Activated CD4-positive, alpha-beta memory T cell treated with anti-CD3 and anti-CD28 coated beads for 36 hours (primary cell): ENCODE measurements at regions of chr20 and their contacts with region 1.

Region 1: DNA sequence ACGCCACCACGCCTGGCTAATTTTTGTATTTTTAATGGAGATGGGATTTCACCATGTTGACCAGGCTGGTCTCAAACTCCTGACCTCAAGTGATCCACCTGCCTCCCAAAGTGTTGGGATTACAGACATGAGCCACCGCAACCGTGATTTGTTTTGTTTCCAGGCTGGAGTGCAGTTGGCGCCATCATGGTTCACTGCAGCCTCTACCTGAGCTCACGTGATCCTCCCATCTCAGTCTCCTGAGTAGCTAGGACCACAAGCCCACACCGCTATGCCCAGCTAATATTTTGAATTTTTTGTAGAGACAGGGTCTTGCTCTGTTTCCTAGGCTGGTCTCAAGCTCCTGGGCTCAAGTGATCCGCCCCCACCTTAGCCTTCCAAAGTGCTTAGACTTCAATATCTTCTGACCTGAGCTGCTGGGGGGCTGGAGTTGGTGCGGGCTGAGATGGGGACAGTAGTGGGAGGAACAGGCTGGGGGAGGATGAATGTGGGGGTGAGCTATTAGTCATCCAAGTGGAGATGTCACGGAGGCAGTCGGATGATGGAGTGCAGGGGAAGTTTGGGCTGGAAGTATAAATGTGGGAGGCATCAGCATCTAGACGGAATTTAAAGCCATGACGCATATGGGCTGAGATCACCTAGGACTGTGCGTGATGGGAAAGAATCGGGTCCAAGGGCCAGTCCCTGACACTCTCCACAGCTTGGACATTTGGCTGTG is 23.1 kb upstream of the ZMYND8 start:
- DNase-seq: no peak
- H3K4me3 Mint-ChIP-seq: no peak overlapping the region
- H3K27ac Mint-ChIP-seq: no peak overlapping the region
- H3K4me1 Mint-ChIP-seq: peaks cover 18% of the 10 kb centered on the region
- H3K27me3 Mint-ChIP-seq: no peaks in the 10 kb centered on the region

Region 2: DNA sequence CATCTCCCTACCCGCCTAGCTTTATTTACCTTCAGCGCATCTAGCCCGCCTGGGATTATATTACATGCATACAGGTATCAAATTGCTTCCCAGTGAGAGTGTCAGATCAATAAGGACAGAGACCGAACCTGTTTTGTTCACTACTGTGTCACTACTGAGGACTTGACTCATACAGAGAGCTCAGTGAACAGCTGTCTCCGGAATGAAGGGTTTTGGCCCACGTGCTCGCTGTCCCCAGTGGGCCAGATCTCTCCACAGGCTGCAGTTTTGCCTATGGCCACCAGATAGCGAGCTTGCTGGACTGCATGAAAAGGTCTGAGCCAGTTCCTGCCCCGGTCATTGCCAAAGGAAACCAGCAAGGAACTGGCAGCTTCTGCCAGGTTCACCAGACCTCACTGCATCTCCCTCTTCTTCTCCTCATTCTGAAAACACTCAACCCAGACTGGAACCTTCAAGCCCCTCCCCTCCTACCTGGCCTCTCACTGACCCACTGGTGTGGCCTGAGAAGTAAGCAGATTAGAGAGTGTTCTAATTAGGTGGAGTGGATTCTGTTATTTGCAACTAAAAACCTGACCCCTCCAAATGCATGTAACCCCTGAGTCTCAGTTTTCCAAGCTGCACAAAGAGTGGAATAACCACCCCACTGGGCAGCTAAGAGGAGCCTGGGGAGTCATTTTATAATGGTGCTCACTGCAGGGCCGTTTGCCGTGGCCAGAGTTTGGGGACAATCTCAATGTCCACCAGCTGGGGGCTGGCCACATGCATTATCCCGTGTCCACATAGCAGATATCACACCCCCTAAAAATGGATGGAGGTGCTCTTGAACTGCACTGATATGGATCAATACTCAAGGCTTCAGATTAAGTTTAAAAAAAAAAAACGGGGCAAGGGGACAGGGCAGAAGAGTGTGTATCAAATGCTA is 173.8 kb before region 1 on chr20:
- CTCF ChIA-PET with region 1: interaction called, 122 read pairs
- POLR2A ChIA-PET with region 1: no interaction called
- intact Hi-C with region 1: no loop called
- DNase-seq: peak; percentile 12
- H3K4me3 Mint-ChIP-seq: no peak overlapping the region
- H3K27ac Mint-ChIP-seq: no peak overlapping the region
- H3K4me1 Mint-ChIP-seq: no peaks in the 10 kb centered on the region
- H3K27me3 Mint-ChIP-seq: no peaks in the 10 kb centered on the region

Region 3: GRCh38 chr20:47241345-47241781 is 138.2 kb before region 1 on chr20:
- CTCF ChIA-PET with region 1: interaction called, 10 read pairs
- POLR2A ChIA-PET with region 1: no interaction called
- intact Hi-C with region 1: no loop called
- DNase-seq: no peak
- H3K4me3 Mint-ChIP-seq: no peak overlapping the region
- H3K27ac Mint-ChIP-seq: no peak overlapping the region
- H3K4me1 Mint-ChIP-seq: peaks cover 3% of the 10 kb centered on the region
- H3K27me3 Mint-ChIP-seq: no peaks in the 10 kb centered on the region

Region 4: GRCh38 chr20:47296950-47297349 is 82.6 kb before region 1 on chr20:
- CTCF ChIA-PET with region 1: interaction called, 26 read pairs
- POLR2A ChIA-PET with region 1: interaction called, 3 read pairs
- intact Hi-C with region 1: no loop called
- DNase-seq: no peak
- H3K4me3 Mint-ChIP-seq: no peak overlapping the region
- H3K27ac Mint-ChIP-seq: no peak overlapping the region
- H3K4me1 Mint-ChIP-seq: peaks cover 12% of the 10 kb centered on the region
- H3K27me3 Mint-ChIP-seq: no peaks in the 10 kb centered on the region

Region 5: DNA sequence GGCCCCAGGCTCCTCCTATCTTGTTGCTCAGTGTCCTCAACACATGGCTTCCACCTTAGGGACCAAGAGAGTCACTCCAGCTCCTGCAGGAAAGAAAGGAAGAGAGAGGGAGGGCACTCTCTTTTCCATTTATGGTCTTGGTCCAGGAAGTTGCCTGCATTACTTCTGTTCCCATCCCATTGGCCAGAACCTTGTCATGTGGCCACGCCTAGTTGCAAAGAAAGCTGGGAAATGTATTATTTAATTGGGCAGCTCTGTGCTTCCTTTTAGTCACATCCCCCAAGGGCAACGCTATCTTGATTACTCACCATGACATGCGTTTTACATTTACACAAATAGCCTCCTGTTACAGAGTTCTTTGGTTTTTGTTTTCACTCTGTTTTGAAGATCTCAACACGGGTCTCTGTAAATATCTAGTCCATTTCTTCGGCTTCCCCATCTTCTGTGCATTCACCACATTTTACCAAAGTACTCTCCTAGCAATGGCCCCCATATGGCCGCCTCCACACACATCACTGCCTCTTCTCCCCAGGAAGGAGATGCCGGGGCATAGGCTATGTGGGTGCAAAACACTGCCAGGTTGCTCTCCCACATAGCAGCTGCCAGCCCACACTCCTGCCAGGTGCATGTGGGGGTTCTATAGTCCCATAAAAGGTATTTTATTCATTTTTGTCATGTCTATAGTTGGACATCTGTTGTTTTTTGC is 12.6 kb after region 1 on chr20:
- CTCF ChIA-PET with region 1: interaction called, 24 read pairs
- POLR2A ChIA-PET with region 1: no interaction called
- intact Hi-C with region 1: no loop called
- DNase-seq: peak; percentile 29
- H3K4me3 Mint-ChIP-seq: no peak overlapping the region
- H3K27ac Mint-ChIP-seq: peak overlapping the region; percentile 31
- H3K4me1 Mint-ChIP-seq: peaks cover 17% of the 10 kb centered on the region
- H3K27me3 Mint-ChIP-seq: no peaks in the 10 kb centered on the region

Region 6: GRCh38 chr20:47493175-47493962 is 113.8 kb after region 1 on chr20:
- CTCF ChIA-PET with region 1: interaction called, 10 read pairs
- POLR2A ChIA-PET with region 1: no interaction called
- intact Hi-C with region 1: no loop called
- DNase-seq: peak; percentile 81
- H3K4me3 Mint-ChIP-seq: peak overlapping the region; percentile 22
- H3K27ac Mint-ChIP-seq: peak overlapping the region; percentile 64
- H3K4me1 Mint-ChIP-seq: peaks cover 67% of the 10 kb centered on the region
- H3K27me3 Mint-ChIP-seq: no peaks in the 10 kb centered on the region

Region 7: GRCh38 chr20:47725248-47725973 is 345.8 kb after region 1 on chr20:
- CTCF ChIA-PET with region 1: no interaction called
- POLR2A ChIA-PET with region 1: no interaction called
- intact Hi-C with region 1: no loop called
- DNase-seq: peak; percentile 90
- H3K4me3 Mint-ChIP-seq: no peak overlapping the region
- H3K27ac Mint-ChIP-seq: no peak overlapping the region
- H3K4me1 Mint-ChIP-seq: peaks cover 22% of the 10 kb centered on the region
- H3K27me3 Mint-ChIP-seq: no peaks in the 10 kb centered on the region